ENCODE measurements at regions of chr3 and their contacts with region 1.

Region 1: GRCh38 chr3:128680602-128681368 is 30.2 kb upstream of the RPN1 start:
- DNase-seq: peak; percentile 98
- ATAC-seq: peak; percentile 98
- H3K4me3 Mint-ChIP-seq: peak overlapping the region; percentile 90
- H3K27ac Mint-ChIP-seq: peak overlapping the region; percentile 99
- H3K4me1 Mint-ChIP-seq: peaks cover 39% of the 10 kb centered on the region
- H3K27me3 Mint-ChIP-seq: peaks cover 8% of the 10 kb centered on the region

Region 2: DNA sequence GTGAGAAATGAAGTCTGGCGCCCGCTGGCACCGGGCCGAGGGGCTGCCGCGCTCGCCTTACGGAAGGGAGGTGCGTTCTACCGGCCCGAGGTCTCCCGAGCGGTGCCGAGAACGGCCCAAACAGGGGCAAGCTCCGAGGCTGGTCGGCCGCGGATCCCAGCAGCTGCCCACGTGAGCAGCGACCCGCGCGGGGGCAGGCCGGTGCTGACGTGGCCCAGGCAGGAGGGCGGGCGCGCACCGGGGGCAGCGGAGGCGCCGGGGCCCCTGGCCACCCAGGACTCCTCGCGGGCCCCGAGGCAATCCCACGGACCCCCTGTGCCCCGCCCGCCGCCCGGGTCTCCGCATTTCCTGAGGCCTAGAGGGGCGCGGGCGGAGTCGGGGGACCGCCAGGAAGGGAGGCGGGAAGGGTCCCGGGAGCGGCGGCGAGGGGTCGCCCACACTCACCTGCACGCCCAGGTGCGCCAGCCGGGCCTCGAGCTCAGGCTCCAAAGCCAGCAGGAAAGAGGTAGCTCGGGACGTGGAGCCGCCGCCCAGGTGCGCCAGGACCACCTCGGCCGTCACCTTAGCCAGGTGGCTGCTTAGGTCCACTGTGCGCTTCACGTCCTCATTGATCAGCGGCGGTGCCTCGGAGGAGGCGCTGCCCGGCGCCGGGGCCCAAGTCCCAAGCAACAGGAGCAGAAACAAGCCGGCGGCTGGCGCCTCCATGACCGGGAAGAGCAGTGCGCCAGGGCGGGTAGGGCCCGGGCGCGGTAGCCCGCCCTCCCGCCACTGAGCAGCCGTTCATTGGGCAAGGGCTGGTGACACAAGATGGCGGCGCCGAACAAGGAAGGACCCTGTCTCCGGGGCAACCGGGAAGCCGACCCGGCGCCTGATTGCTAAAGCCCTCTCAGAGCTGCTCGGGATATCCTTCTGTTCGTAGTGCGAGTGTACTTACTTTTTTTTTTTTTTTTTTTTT is 30.4 kb before region 1 on chr3 and contains the start of gene RPN1:
- CTCF ChIA-PET with region 1: interaction called, 17 read pairs
- POLR2A ChIA-PET with region 1: interaction called, 15 read pairs
- DNase-seq: peak; percentile 96
- ATAC-seq: peak; percentile 98
- H3K4me3 Mint-ChIP-seq: peak within 1 kb of the TSS; percentile 88
- H3K27ac Mint-ChIP-seq: peak within 1 kb of the TSS; percentile 89
- H3K4me1 Mint-ChIP-seq: peaks cover 40% of the 10 kb centered on the region
- H3K27me3 Mint-ChIP-seq: no peaks in the 10 kb centered on the region
- total RNA-seq, gene RPN1: 157 to 162 TPM

Region 3: GRCh38 chr3:128760042-128760441 is 79.3 kb after region 1 on chr3:
- CTCF ChIA-PET with region 1: interaction called, 22 read pairs
- POLR2A ChIA-PET with region 1: no interaction called
- DNase-seq: no peak
- ATAC-seq: no peak
- H3K4me3 Mint-ChIP-seq: no peak overlapping the region
- H3K27ac Mint-ChIP-seq: no peak overlapping the region
- H3K4me1 Mint-ChIP-seq: peaks cover 35% of the 10 kb centered on the region
- H3K27me3 Mint-ChIP-seq: no peaks in the 10 kb centered on the region

Region 4: GRCh38 chr3:128787256-128788240 is 106.8 kb after region 1 on chr3:
- CTCF ChIA-PET with region 1: interaction called, 256 read pairs
- POLR2A ChIA-PET with region 1: interaction called, 35 read pairs
- DNase-seq: peak; percentile 53
- ATAC-seq: peak; percentile 64
- H3K4me3 Mint-ChIP-seq: peak overlapping the region; percentile 75
- H3K27ac Mint-ChIP-seq: peak overlapping the region; percentile 96
- H3K4me1 Mint-ChIP-seq: peaks cover 82% of the 10 kb centered on the region
- H3K27me3 Mint-ChIP-seq: no peaks in the 10 kb centered on the region

Region 5: DNA sequence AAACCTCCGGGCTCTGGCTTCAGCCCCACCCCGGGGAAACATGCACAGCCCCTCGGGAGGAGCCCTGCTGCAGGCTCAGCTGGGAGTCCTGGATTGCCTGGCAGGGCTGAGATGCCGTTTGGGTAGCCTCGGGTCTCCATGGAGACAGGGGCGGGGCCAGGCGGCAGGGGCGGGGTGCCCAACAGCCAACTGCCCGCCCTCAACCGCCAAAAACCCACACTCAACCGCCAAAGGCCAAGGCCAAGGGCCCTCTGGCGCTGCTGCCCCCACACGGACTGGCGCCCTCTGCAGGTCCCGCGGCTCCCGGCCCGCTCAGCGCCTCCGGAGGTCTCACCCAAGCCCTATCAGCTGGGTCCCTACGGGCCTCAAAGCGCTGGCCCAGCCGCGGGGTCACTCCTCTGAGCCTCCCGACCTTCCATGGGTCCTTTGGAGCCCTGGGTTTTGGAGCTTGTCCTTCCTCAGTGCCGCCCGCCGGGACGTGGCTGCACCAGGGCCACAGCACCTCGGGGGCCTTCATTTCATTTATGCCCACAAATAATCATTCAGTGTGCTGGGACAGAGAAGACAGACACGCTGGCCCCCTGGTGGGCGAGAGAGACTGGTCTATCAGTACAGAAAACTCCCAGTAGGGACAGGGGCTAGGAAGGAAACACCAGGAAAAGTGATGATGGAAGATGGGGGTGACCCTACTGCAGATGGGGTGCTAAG is 165.1 kb after region 1 on chr3:
- CTCF ChIA-PET with region 1: interaction called, 35 read pairs
- POLR2A ChIA-PET with region 1: interaction called, 13 read pairs
- DNase-seq: peak; percentile 82
- ATAC-seq: peak; percentile 84
- H3K4me3 Mint-ChIP-seq: peak overlapping the region; percentile 68
- H3K27ac Mint-ChIP-seq: peak overlapping the region; percentile 82
- H3K4me1 Mint-ChIP-seq: peaks cover 19% of the 10 kb centered on the region
- H3K27me3 Mint-ChIP-seq: no peaks in the 10 kb centered on the region

Region 6: DNA sequence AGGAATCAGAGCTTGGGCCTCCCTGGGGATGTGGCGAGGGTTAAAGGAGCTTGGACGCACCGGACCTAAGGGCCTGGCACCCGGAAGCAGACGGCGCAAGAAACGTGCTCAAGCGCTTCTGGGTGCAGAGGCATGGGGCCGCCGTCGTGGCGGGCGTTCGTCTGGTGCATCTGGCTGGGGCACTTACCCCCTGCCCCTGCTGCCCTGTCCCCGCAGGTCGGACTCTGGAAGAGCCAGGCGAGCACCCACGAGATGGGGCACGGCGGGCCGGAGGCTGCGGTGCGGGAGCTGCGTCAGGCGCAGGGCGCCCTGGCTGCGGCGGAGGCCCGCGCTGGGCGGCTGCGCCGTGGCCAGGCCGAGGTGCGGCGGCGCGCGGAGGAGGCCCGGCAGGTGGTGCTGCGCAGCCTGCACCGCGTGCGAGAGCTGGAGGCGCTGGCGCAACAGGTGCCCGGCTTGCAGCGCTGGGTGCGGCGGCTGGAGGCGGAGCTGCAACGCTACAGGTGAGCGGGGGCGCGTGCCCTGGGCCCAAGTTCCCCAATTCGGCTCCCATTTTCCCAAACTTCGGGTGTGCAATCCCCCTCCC is 322.9 kb after region 1 on chr3:
- CTCF ChIA-PET with region 1: no interaction called
- POLR2A ChIA-PET with region 1: no interaction called
- DNase-seq: peak; percentile 58
- ATAC-seq: peak; percentile 79
- H3K4me3 Mint-ChIP-seq: peak overlapping the region; percentile 10
- H3K27ac Mint-ChIP-seq: no peak overlapping the region
- H3K4me1 Mint-ChIP-seq: peaks cover 50% of the 10 kb centered on the region
- H3K27me3 Mint-ChIP-seq: peaks cover 39% of the 10 kb centered on the region